H1 (cell line): ENCODE measurements at regions of chr4 and their contacts with region 1.

Region 1: GRCh38 chr4:2441393-2442174 is 22.8 kb downstream of the CFAP99 start:
- DNase-seq: peak; percentile 86 to 91
- H3K4me3 ChIP-seq: no peak overlapping the region
- H3K27ac ChIP-seq: no peak overlapping the region
- H3K4me1 ChIP-seq: no peaks in the 10 kb centered on the region; a peak in 3 of 7 replicates
- H3K27me3 ChIP-seq: no peaks in the 10 kb centered on the region
- CTCF ChIP-seq: peak in 2 of 3 experiments; percentile 99; a peak in 3 of 4 replicates
- EP300 ChIP-seq: no peak
- POLR2A ChIP-seq: no peak
- RAD21 ChIP-seq: peak; percentile 83 to 90

Region 2: DNA sequence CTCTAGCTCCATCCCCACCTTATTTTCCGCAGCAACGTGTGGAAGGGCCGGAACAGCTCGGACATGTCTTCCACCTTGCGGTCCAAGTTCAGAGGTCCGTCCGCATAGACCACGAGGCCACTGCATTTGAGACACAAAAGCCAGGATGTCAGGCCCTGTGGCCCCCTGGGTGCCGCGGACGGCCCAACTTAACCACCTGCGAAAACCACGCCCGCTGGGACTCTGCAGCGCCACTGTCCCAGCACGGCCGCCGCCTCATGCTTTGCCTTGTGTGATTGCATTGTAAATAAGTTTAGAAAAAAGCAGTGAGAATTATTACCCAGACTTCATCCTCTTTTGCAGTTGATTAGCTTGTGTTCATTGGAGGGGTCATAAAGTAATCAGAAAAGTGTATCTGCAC is 121.4 kb before region 1 on chr4:
- CTCF ChIA-PET with region 1: no interaction called
- POLR2A ChIA-PET with region 1: no interaction called
- DNase-seq: no peak
- H3K4me3 ChIP-seq: no peak overlapping the region
- H3K27ac ChIP-seq: no peak overlapping the region
- H3K4me1 ChIP-seq: no peaks in the 10 kb centered on the region; a peak in 2 of 7 replicates
- H3K27me3 ChIP-seq: no peaks in the 10 kb centered on the region
- CTCF ChIP-seq: no peak
- EP300 ChIP-seq: no peak
- POLR2A ChIP-seq: no peak
- RAD21 ChIP-seq: no peak

Region 3: DNA sequence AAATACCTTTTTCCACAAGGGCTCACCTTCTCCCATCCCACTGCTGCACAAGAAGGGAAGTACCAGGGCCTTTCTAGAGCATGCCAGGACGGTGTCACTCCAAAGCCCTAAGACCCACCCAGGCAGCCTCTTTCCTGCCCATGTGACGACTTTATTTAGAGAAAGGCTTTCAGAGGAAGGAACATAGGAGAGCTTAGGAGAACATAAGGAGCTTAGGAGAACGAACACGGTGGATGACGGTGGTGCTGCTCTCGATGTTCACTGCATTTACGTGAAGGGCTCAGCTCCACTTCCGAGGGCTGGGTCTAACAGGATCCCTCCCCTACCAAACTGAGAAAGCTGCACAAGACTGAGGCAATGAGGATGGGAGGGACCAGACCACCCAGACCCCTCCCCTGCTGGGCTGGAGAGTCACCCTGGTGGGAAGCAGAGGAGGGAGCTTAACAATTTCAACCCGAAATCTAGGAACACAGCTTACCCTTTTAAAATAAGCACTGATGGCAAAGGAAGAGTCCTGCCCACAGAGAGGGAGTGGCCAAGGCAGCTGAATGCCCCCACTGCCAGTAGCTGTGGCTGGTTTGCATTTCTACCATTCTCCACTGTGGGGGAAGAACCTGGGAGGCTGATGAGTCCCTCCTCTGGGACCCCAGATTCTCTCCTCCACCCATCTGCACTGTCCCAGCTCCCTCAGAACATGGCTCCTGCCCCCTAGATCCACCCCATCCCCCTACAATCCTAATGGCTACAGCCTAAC is 53.0 kb before region 1 on chr4:
- CTCF ChIA-PET with region 1: interaction called, 13 read pairs
- POLR2A ChIA-PET with region 1: no interaction called
- DNase-seq: no peak
- H3K4me3 ChIP-seq: no peak overlapping the region
- H3K27ac ChIP-seq: no peak overlapping the region
- H3K4me1 ChIP-seq: peaks cover 0 to 24% (median 10%) of the 10 kb centered on the region in 4 experiments; a peak in 6 of 7 replicates
- H3K27me3 ChIP-seq: no peaks in the 10 kb centered on the region
- CTCF ChIP-seq: no peak
- EP300 ChIP-seq: no peak
- POLR2A ChIP-seq: no peak
- RAD21 ChIP-seq: no peak

Region 4: GRCh38 chr4:2428496-2429213 is 12.9 kb before region 1 on chr4:
- CTCF ChIA-PET with region 1: interaction called, 40 read pairs
- POLR2A ChIA-PET with region 1: interaction called, 3 read pairs
- DNase-seq: no peak
- H3K4me3 ChIP-seq: no peak overlapping the region
- H3K27ac ChIP-seq: no peak overlapping the region
- H3K4me1 ChIP-seq: peaks cover 0 to 7% (median under 1%) of the 10 kb centered on the region in 4 experiments; a peak in 5 of 7 replicates
- H3K27me3 ChIP-seq: no peaks in the 10 kb centered on the region
- CTCF ChIP-seq: no peak
- EP300 ChIP-seq: no peak
- POLR2A ChIP-seq: no peak
- RAD21 ChIP-seq: no peak

Region 5: DNA sequence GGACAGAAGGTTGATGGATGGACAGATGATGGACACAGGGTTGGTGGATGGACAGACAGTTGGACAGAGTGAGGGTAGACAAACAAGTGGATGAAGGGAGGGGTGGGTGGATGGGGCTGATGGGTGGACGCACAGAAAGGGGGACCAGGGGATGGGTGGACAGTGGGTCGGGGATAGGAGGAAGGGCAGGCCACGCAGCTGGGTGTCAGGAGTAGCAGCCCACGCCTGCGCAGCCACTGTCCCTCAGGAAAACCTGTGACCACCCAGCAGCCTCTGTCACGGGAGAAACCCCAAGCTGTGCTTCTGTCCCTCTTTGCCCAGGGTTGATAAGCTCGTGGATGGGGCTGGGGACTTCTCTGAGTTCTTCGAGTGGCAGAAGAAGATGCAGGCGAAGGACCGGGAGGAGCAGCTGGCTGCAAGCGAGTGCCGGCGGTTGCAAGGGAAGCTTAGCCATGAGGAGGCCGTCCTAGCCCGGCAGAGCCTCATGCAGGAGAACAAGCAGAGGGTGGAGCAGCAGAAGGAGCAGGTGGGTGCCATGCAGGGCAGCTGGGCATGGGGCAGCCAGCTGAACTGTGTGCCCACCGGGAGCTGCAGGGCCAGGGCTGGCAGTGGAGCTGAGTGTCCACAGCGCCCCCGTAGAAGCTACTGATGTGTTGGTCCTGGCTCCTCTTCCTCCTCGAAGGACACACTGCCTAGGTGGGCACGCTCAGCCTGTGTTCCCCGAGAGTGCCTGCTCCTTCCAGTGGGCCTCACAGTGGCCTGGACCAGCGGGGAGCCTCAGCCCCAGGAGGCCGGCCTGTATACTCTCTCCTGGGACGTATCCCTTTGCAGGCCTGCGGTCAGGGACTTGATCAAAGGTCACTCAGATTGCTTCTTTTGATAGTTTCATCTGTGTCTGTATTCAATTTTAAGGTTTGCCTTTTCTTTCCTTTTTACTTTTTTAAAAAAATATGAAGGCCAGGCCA is 10.5 kb after region 1 on chr4:
- CTCF ChIA-PET with region 1: interaction called, 53 read pairs
- POLR2A ChIA-PET with region 1: no interaction called
- DNase-seq: no peak
- H3K4me3 ChIP-seq: no peak overlapping the region
- H3K27ac ChIP-seq: no peak overlapping the region
- H3K4me1 ChIP-seq: no peaks in the 10 kb centered on the region
- H3K27me3 ChIP-seq: no peaks in the 10 kb centered on the region
- CTCF ChIP-seq: no peak
- EP300 ChIP-seq: no peak
- POLR2A ChIP-seq: no peak
- RAD21 ChIP-seq: no peak

Region 6: DNA sequence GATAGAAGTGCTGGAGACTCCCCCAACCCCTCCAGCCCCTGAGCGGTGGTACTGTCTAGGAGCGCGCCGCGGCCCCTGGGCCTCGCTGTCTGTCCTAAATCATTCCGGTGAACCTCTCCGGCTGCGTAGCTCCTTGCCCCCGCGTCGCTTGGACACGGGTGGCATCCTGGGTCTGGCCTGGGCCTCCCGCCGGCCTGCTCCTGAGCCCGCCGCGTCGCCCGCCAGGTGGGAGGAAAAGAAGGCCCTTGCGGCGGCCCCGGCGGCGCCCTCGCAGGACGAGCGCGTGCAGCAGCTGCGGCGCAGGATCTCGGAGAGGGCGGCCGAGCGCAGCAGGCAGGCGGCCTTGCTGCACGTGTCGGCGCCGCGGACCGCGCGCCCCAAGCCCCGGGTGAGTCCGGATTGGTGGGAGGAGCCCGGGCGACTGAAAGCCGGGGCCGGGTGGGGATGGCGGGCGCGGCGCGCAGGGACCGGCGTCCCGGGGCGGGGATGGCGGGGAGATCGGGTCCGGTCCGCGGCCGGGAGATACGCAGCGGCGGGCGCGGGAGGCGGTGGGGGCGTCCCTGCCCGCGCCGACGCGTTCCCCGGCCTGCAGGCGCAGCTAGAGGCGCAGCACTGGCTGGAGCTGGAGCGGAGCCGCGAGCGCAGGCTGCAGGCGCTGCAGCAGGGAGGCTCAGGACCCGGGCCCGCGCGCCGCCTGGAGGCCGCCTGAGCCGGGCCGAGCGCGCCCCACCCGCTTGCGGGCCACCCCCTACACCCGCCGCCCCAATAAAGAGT is 20.8 kb after region 1 on chr4:
- CTCF ChIA-PET with region 1: interaction called, 39 read pairs
- POLR2A ChIA-PET with region 1: interaction called, 3 read pairs
- DNase-seq: peak in 1 of 2 experiments; percentile 81
- H3K4me3 ChIP-seq: peak overlapping the region; percentile 34 to 64 (median 37)
- H3K27ac ChIP-seq: no peak overlapping the region
- H3K4me1 ChIP-seq: peaks cover 0 to 9% (median 7%) of the 10 kb centered on the region in 4 experiments; a peak in 6 of 7 replicates
- H3K27me3 ChIP-seq: peaks cover 0 to 20% (median 13%) of the 10 kb centered on the region in 4 experiments; a peak in 5 of 7 replicates
- CTCF ChIP-seq: peak in 2 of 3 experiments; percentile 43 to 50; a peak in 3 of 4 replicates
- EP300 ChIP-seq: no peak; a peak in 1 of 3 replicates
- POLR2A ChIP-seq: no peak
- RAD21 ChIP-seq: peak; percentile 10 to 38; a peak in 1 of 4 replicates

Region 7: DNA sequence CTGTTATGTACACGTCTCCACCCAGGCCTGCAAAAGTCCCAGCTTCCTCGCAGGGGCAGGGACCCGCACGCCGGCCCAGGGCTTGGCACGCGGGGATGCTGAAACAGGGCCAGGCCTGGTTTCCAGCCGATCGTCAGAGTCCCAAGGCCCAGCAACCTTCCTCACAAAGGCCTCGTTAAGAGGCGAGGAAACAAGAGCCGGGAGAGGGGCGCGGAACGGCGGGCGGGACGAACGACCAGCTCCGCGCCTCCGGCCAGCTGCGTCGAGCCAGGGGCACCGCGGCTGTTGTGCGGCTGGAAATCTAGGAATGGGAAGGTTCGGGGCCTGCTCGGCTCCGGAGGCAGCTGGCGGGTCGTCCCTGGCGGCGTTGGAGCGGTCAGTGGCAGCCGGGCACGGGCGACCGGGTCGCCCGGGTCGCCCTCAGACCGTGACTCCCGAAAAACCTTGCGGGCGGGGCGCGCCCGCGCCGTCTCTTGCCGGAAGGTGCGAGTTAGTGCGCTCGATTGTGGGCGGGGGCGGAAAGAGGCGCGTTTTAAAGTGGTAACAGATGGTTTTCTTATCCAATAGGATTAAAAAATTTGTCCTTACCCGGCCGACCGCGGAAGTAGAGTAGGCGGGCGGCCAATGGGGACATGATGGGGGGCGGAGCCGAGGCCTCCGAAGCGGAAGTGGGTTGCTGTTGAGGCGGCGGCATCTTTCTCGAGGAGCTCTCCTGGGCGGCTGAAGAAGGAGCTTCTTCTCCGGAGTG is 27.0 kb after region 1 on chr4 and contains the start of gene RNF4:
- CTCF ChIA-PET with region 1: interaction called, 30 read pairs
- POLR2A ChIA-PET with region 1: interaction called, 7 read pairs
- DNase-seq: peak; percentile 77 to 89
- H3K4me3 ChIP-seq: peak within 1 kb of the TSS; percentile 88 to 96 (median 90)
- H3K27ac ChIP-seq: peak within 1 kb of the TSS; percentile 81
- H3K4me1 ChIP-seq: peaks cover 0 to 4% (median 0%) of the 10 kb centered on the region in 4 experiments; a peak in 3 of 7 replicates
- H3K27me3 ChIP-seq: peaks cover 0 to 3% (median 0%) of the 10 kb centered on the region in 4 experiments; a peak in 3 of 7 replicates
- CTCF ChIP-seq: no peak
- EP300 ChIP-seq: no peak
- POLR2A ChIP-seq: peak in 1 of 2 experiments; percentile 68; a peak in 1 of 3 replicates
- RAD21 ChIP-seq: no peak
- total RNA-seq, gene RNF4: 75.0 and 78.9 TPM in 2 replicates